Activated naive CD4-positive, alpha-beta T cell treated with anti-CD3 and anti-CD28 coated beads for 36 hours (primary cell): ENCODE measurements at regions of chrX and their contacts with region 1.

Region 1: GRCh38 chrX:101097546-101098453 is at the start of gene CENPI:
- DNase-seq: peak; percentile 95
- H3K4me3 Mint-ChIP-seq: peak within 1 kb of the TSS; percentile 92
- H3K27ac Mint-ChIP-seq: peak within 1 kb of the TSS; percentile 86
- H3K4me1 Mint-ChIP-seq: peaks cover 22% of the 10 kb centered on the region
- H3K27me3 Mint-ChIP-seq: no peaks in the 10 kb centered on the region
- total RNA-seq, gene CENPI: 19.1 to 20.4 TPM

Region 2: GRCh38 chrX:100829730-100830129 is 268.1 kb before region 1 on chrX:
- CTCF ChIA-PET with region 1: no interaction called
- intact Hi-C with region 1: loop called (anchors 1 kb)
- DNase-seq: peak; percentile 56
- H3K4me3 Mint-ChIP-seq: peak overlapping the region; percentile 36
- H3K27ac Mint-ChIP-seq: peak overlapping the region; percentile 97
- H3K4me1 Mint-ChIP-seq: peaks cover 39% of the 10 kb centered on the region
- H3K27me3 Mint-ChIP-seq: no peaks in the 10 kb centered on the region

Region 3: DNA sequence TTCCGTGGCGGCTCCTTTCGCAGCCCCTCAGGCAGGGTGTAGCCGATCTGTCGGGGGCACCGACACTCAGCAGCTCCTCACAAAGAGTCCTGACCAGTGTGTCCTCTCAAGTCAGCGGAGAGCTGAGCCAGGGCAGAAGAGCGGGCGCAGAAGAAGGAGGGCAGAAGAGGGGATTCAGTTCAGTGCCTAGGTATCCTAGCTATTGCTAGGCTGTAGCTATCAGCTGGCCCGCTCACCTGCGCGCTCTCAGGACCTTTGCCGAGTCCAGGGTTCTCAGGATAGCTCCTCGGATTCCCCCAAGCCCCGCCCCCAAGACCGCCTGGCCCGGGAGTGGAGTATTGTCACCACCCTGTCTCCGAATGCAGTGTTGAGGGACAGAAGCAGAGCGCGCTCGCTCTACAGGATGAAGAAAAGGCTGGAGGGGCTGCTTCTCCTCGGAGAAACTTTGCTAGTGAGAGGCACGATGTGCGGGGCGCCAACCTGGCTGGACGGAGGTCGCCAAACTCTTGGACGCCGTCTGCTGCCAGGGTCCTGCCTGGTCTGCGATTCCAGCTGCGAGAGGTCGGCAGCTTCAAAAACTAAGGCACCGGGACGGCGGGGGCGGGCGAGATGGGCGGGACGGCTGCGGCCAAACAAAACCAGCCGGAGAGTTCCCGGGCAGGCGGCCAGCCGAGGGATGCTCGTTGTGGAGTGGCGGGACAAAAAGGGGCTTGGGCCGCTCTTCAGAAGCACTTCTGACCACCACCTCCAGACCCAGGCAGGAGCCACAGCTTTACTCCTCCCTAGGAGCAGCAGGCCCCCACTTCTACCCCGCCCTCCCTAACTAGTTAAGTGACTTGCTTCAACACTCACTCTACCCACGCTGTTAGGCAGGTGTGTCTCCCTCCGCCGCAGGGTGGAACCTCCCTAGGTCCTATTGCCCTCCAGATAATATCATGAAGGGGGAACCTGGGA is 168.9 kb before region 1 on chrX and contains the start of gene XKRX:
- CTCF ChIA-PET with region 1: no interaction called
- intact Hi-C with region 1: loop called (anchors 2 kb)
- DNase-seq: peak; percentile 74
- H3K4me3 Mint-ChIP-seq: peak within 1 kb of the TSS; percentile 82
- H3K27ac Mint-ChIP-seq: no peak within 1 kb of the TSS
- H3K4me1 Mint-ChIP-seq: peaks cover 52% of the 10 kb centered on the region
- H3K27me3 Mint-ChIP-seq: no peaks in the 10 kb centered on the region
- total RNA-seq, gene XKRX: 0.64 to 0.72 TPM

Region 4: DNA sequence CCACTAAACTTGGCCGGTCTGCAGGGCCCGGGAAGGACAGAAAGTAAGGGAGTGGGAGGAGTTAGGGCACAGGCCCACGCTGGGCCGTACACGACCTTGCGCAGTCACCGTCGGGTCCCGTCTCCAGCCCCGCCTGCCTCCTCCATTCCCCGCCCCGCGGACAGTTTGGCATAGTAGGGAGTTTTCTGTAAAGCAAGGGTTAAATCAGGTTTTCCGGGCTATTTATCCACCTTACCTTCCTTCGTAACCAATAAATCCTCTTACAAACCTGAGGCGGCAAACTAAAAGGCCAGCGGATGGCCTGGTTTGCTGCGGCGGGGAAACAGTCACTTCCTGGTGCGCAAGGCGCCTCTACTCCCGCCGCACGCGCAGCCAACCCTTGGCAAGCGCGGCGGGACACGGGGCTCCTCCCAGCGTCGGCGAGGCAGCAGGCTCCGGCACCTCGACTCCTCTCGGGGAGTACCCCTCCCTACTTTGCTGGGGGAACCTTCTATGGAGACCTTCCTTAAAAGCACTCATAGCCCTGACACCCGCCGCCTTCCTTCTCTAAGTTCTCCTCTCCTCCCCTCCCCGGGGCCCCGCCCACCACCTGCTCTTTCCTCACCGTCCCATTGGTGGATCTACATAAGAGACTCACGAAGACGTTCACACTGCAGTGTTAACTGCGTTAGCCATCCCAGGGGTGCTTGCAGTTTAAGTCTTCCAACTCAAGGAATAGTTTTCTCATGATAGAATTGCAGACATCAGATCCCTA is 46.1 kb before region 1 on chrX and contains the start of gene TRMT2B:
- CTCF ChIA-PET with region 1: no interaction called
- intact Hi-C with region 1: loop called (anchors 1 kb)
- DNase-seq: peak; percentile 85
- H3K4me3 Mint-ChIP-seq: peak within 1 kb of the TSS; percentile 85
- H3K27ac Mint-ChIP-seq: peak within 1 kb of the TSS; percentile 95
- H3K4me1 Mint-ChIP-seq: peaks cover 25% of the 10 kb centered on the region
- H3K27me3 Mint-ChIP-seq: no peaks in the 10 kb centered on the region
- total RNA-seq, gene TRMT2B: 20.2 to 22.2 TPM

Region 5: DNA sequence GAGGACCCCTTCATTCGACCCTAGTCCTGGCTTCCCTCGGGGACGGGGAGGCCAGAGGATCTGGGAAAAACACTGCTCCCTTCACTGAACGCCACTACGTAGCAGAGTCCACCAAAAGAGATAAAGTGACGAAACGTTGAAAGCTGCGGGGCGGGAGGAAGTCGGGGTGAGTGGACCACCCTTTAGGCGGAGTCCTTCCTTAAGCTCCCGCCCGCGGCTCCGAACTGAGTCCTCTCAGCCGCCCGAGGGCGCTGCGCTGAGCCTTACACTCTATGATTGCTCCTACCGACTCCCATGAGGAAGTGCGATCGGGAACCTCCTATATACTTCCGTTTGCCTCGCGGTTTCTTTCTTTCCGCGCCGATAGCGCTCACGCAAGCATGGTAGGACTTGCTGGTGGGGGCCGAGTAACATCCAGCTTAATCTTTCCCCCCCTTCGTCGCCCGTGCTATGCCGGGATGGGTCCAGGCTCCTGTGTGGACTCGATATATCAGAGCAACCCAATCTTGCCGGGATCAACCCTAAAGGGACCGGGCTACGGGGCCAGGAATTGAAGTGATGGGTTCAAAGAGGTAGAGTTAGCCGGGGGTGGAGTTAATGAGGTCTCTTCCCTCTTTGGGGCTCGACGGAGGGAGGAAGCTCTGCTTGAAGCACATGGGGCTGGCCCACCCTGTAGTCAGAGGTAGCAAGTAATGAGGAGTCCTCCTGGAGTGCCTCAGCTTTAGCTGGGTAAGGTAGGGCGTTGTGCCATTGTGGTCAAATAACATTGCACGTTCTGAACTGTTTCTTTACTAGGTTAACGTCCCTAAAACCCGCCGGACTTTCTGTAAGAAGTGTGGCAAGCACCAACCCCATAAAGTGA is 293.1 kb after region 1 on chrX and contains the start of gene RPL36A:
- CTCF ChIA-PET with region 1: no interaction called
- intact Hi-C with region 1: loop called (anchors 5 kb)
- DNase-seq: peak; percentile 88
- H3K4me3 Mint-ChIP-seq: peak within 1 kb of the TSS; percentile 93
- H3K27ac Mint-ChIP-seq: peak within 1 kb of the TSS; percentile 94
- H3K4me1 Mint-ChIP-seq: peaks cover 18% of the 10 kb centered on the region
- H3K27me3 Mint-ChIP-seq: no peaks in the 10 kb centered on the region
- total RNA-seq, gene RPL36A: 446 to 500 TPM